Adrenal gland (tissue), 19 donors: ENCODE measurements at regions of chr18 and their contacts with region 1.

Region 1: GRCh38 chr18:27005589-27005988 is 140.1 kb upstream of the AQP4 start:
- DNase-seq: no peak
- H3K4me3 ChIP-seq: no peak overlapping the region
- H3K27ac ChIP-seq: no peak overlapping the region
- H3K4me1 ChIP-seq: no peaks in the 10 kb centered on the region
- H3K27me3 ChIP-seq: no peaks in the 10 kb centered on the region
- CTCF ChIP-seq: peak in 2 of 6 experiments; percentile 15 to 25
- POLR2A ChIP-seq: no peak

Region 2: GRCh38 chr18:26813043-26813442 is 192.5 kb before region 1 on chr18:
- intact Hi-C with region 1: loop called in 1 of 2 experiments (anchors 10 kb)
- DNase-seq: peak; percentile 35 to 67 (median 55)
- H3K4me3 ChIP-seq: no peak overlapping the region
- H3K27ac ChIP-seq: no peak overlapping the region
- H3K4me1 ChIP-seq: no peaks in the 10 kb centered on the region
- H3K27me3 ChIP-seq: no peaks in the 10 kb centered on the region
- CTCF ChIP-seq: peak; percentile 10 to 65 (median 56)
- POLR2A ChIP-seq: no peak